GM23248 (cell line): ENCODE measurements at regions of chr12 and their contacts with region 1.

Region 1: GRCh38 chr12:132614861-132615578 is 3.6 kb upstream of the P2RX2 start:
- DNase-seq: peak; percentile 86
- H3K4me3 ChIP-seq: no peak overlapping the region
- H3K27ac ChIP-seq: no peak overlapping the region
- H3K4me1 ChIP-seq: no peaks in the 10 kb centered on the region
- H3K27me3 ChIP-seq: peaks cover 42% of the 10 kb centered on the region

Region 2: GRCh38 chr12:132153501-132154340 is 461.3 kb before region 1 on chr12:
- in situ Hi-C with region 1: loop called (anchors 25 kb)
- DNase-seq: peak; percentile 88
- H3K4me3 ChIP-seq: no peak overlapping the region
- H3K27ac ChIP-seq: no peak overlapping the region
- H3K4me1 ChIP-seq: no peaks in the 10 kb centered on the region
- H3K27me3 ChIP-seq: no peaks in the 10 kb centered on the region

Region 3: DNA sequence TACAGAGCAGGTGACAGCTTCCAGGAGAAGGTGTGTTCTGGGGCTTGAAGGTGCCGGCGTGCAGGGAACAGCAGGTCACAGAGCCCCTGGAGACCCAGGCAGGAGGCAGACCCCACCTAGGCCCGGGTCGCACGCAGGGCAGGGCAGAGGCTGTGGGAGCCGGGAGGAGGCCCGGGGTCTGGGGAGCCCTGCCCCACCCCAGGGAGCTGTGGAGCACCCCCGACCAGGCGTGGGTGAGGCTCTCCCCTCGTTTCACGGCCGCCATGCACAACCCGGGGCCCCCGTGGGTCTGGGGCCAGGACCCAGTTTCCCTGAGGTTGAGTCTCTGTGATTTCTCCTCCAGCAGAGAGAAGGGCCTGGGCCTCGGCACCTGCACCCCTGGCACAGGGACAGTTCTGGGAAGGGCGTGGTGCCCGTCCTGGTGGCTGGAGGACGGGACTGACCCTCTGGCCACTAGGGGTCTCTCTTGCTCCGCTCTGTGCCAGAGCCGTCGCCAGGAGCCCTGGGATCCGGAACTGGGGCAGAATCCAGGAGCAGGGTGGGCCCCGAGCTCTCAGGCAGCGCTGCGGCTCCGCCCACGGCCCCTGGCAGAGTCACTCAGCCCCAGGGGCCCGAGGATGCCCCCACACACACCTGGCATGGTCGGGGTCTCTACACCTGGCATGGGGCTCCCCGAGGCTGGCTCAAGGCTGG is 200.2 kb before region 1 on chr12:
- in situ Hi-C with region 1: loop called (anchors 10 kb)
- DNase-seq: peak; percentile 87
- H3K4me3 ChIP-seq: no peak overlapping the region
- H3K27ac ChIP-seq: no peak overlapping the region
- H3K4me1 ChIP-seq: peaks cover 4% of the 10 kb centered on the region; the same call in 1 of the 2 replicates
- H3K27me3 ChIP-seq: peaks cover 30% of the 10 kb centered on the region

Region 4: DNA sequence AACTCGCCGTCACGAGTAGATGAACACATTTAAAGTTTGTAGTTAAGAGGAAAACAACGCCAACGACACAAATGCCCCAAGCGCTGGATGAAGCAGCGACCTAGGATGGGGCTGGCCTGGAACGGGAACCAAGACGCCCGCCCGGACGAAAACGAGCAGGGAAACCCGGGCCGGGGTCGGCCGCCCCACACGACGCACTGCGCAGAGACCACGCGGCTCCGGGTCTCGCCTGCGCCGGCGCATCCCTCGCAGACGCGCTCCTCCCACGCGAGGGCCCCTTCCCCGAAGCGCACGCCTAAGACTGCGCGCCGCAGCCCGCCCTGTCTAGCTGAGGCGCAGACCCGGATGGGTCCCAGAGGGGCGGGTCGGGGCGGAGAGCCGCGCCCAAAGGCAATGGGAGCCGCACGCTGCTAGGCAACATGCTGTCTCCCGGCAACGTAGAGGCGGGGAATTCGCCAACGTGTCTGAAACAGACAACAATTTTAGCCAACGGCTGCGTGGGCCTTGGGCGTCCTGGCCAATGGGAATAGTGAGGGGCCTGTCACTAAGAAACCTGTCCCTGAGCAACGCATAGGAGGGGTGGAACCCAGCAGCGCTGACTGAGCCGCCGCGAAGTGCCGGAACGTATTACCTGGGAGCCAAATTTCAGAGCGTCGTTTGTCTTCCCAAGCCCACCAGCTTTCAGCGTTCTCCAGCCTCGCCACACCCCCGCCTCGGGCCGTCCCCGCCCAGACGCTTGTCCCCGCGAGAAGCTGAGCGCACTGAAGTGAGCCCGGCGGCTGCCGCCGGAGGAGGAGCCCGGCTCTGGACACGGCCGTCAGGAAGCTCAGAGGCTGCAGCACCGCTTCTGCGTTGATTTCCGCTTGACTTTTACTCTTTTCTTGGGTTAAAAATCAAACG is 293.4 kb after region 1 on chr12:
- in situ Hi-C with region 1: no loop called
- DNase-seq: peak; percentile 99
- H3K4me3 ChIP-seq: peak overlapping the region; percentile 78
- H3K27ac ChIP-seq: peak overlapping the region; percentile 88
- H3K4me1 ChIP-seq: no peaks in the 10 kb centered on the region
- H3K27me3 ChIP-seq: no peaks in the 10 kb centered on the region